ENCODE measurements at regions of chr2 and their contacts with region 1.

Region 1: DNA sequence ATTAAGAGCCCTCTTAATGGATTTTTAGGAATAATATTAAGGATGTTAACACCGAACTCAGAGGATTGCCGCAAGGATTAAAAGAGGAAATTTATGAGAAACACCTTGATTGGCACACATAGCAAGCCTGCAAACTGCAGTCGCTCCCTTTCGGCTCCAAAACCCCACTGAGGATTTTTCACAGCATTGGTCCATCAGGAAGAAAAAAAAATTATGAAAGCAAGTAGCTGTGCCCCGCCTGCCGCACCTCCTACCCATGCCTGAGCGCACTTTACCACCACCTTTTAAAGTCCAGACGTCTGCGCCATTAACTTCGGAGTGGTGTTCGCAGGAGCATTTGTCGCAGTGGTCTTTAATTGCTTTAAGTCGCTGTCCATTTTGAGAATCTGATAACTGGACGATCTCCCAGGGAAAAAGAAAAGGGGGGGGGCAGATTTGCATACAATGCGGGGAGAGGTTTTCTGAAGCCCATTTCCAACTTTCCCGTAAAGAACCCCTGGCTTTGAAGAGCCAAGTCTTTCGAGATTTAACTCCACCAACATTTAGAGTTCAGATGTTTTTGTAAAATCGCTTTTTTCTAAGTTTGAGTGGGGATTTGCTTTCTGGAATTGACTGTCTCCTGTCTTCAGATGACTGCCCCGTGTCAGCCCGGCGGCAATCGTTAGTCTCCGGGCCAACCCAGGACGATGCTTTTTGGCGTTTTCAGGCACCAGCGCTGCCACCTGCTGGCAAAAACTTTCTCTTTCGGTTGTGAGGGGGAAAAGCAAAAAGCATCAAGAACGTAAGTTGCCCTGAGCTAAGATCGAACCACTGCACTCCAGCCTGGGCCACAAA is 914 bp upstream of the TRABD2A start:
- DNase-seq: peak; percentile 94
- ATAC-seq: peak; percentile 71
- H3K4me3 Mint-ChIP-seq: peak overlapping the region; percentile 83
- H3K27ac Mint-ChIP-seq: peak overlapping the region; percentile 88
- H3K4me1 Mint-ChIP-seq: peaks cover 66% of the 10 kb centered on the region
- H3K27me3 Mint-ChIP-seq: no peaks in the 10 kb centered on the region

Region 2: DNA sequence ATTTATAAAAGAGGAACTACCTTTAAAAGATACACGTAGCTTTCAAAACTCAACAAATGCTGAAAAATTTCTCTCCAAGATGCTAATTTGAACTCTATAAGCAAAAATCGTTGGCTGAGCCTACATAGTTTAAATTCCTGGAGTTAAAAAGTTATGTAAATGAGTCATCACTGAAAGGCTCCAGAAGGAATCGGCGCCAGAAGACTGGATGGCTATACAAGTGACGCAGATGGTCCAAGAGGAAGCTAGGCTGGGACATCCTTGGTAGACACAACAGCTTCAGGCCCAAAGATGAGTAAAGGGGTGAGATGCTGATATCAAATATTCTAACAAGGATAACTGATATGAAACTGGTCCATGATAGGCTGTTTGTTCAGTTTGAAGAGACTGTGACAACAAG is 388.3 kb before region 1 on chr2:
- CTCF ChIA-PET with region 1: interaction called, 19 read pairs
- POLR2A ChIA-PET with region 1: no interaction called
- DNase-seq: no peak
- ATAC-seq: no peak
- H3K4me3 Mint-ChIP-seq: no peak overlapping the region
- H3K27ac Mint-ChIP-seq: no peak overlapping the region
- H3K4me1 Mint-ChIP-seq: peaks cover 6% of the 10 kb centered on the region
- H3K27me3 Mint-ChIP-seq: no peaks in the 10 kb centered on the region

Region 3: DNA sequence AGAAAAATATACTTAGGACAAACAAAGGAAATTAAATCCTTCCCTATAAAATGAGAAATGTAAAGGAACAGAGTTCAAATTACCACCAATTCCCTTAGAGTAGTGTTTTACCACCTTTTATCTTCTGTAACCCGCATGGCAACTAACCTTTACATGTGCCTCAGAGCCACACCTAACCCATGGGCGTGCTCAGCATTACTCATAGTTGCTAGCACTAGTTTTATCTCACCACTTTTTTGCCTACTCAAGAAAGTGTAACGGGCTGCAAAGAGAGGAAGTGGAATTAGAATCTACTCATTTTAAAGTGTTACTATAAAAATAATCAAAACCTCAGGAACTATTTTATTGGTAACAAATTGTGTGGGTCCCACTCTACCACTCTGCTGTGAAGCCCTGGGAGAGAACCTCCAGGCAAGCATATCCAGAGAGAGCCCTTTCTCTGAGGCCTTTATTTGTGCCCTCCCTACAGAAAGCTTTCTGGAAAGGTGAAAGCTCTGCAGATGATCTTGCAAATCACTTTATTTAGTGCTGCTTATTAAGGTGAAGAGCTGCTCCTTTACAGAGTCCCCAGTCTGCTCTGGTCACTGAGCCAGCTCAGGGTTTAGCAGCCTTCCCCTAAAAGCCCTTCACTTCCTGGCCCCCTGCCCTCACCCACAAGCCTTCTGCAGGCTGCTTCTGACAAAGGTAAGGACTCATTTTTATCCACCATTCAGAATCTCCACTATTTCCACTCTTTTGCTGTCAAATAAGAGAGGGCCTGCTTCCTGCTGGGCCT is 99.7 kb before region 1 on chr2:
- CTCF ChIA-PET with region 1: interaction called, 15 read pairs
- POLR2A ChIA-PET with region 1: no interaction called
- DNase-seq: peak; percentile 77
- ATAC-seq: peak; percentile 93
- H3K4me3 Mint-ChIP-seq: peak overlapping the region; percentile 66
- H3K27ac Mint-ChIP-seq: peak overlapping the region; percentile 95
- H3K4me1 Mint-ChIP-seq: peaks cover 68% of the 10 kb centered on the region
- H3K27me3 Mint-ChIP-seq: no peaks in the 10 kb centered on the region

Region 4: GRCh38 chr2:84856787-84857186 is 25.0 kb before region 1 on chr2:
- CTCF ChIA-PET with region 1: interaction called, 16 read pairs
- POLR2A ChIA-PET with region 1: interaction called, 4 read pairs
- DNase-seq: peak; percentile 75
- ATAC-seq: peak; percentile 80
- H3K4me3 Mint-ChIP-seq: peak overlapping the region; percentile 40
- H3K27ac Mint-ChIP-seq: peak overlapping the region; percentile 87
- H3K4me1 Mint-ChIP-seq: peaks cover 92% of the 10 kb centered on the region
- H3K27me3 Mint-ChIP-seq: no peaks in the 10 kb centered on the region

Region 5: DNA sequence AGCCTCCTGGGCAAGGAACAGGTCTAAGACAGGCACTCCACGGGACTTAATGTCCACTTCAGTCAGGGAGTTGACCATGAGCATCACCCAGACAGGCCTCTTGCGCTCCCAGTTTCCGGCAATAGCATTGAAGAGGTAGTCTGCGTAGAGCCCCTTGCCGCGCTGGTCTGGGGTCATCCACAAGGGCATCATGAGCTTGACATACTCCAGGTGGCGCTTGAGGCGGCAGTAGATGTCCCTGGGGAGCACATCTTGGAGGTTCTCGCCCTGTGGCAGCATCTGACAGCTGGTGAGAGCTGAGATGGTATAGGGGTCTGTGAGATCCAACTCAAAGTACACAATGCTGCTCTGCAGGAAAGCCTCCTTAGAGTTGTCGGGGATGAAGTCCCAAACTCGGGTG is 11.5 kb before region 1 on chr2:
- CTCF ChIA-PET with region 1: interaction called, 12 read pairs
- POLR2A ChIA-PET with region 1: interaction called, 3 read pairs
- DNase-seq: peak; percentile 20
- ATAC-seq: no peak
- H3K4me3 Mint-ChIP-seq: no peak overlapping the region
- H3K27ac Mint-ChIP-seq: peak overlapping the region; percentile 39
- H3K4me1 Mint-ChIP-seq: peaks cover 81% of the 10 kb centered on the region
- H3K27me3 Mint-ChIP-seq: no peaks in the 10 kb centered on the region

Region 6: GRCh38 chr2:84905181-84906107 is 23.6 kb after region 1 on chr2 and contains the start of gene TMSB10:
- CTCF ChIA-PET with region 1: interaction called, 58 read pairs
- POLR2A ChIA-PET with region 1: interaction called, 90 read pairs
- DNase-seq: peak; percentile 91
- ATAC-seq: peak; percentile 66
- H3K4me3 Mint-ChIP-seq: peak within 1 kb of the TSS; percentile 93
- H3K27ac Mint-ChIP-seq: peak within 1 kb of the TSS; percentile 95
- H3K4me1 Mint-ChIP-seq: peaks cover 75% of the 10 kb centered on the region
- H3K27me3 Mint-ChIP-seq: peaks cover 2% of the 10 kb centered on the region
- total RNA-seq, gene TMSB10: 4,520 to 4,885 TPM

Region 7: DNA sequence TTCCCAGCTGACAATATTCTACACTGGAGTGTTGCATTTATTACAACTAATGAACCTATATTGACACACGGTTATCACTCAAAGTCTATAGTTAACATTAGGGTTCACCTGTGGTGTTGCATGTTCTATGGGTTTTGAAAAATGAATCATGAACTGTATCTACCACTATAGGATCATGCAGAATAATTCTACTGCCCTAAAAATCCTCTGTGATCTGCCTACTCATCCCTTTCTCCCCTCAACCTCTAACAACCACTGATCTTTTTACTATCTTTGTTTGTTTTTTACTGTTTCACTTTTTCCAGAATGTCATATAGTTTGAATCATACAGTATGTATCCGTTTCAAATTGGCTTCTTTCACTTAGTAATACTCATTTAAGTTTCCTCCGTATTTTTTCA is 203.8 kb after region 1 on chr2:
- CTCF ChIA-PET with region 1: no interaction called
- POLR2A ChIA-PET with region 1: no interaction called
- DNase-seq: no peak
- ATAC-seq: no peak
- H3K4me3 Mint-ChIP-seq: no peak overlapping the region
- H3K27ac Mint-ChIP-seq: no peak overlapping the region
- H3K4me1 Mint-ChIP-seq: no peaks in the 10 kb centered on the region
- H3K27me3 Mint-ChIP-seq: peaks cover 18% of the 10 kb centered on the region